OCI-LY7 (cell line): ENCODE measurements at regions of chr6 and their contacts with region 1.

Region 1: GRCh38 chr6:52503848-52504781 is 72.7 kb downstream of the TRAM2 start:
- DNase-seq: no peak
- H3K4me3 ChIP-seq: no peak overlapping the region
- H3K27ac ChIP-seq: no peak overlapping the region
- H3K4me1 ChIP-seq: peaks cover 34% of the 10 kb centered on the region
- CTCF ChIP-seq: no peak

Region 2: DNA sequence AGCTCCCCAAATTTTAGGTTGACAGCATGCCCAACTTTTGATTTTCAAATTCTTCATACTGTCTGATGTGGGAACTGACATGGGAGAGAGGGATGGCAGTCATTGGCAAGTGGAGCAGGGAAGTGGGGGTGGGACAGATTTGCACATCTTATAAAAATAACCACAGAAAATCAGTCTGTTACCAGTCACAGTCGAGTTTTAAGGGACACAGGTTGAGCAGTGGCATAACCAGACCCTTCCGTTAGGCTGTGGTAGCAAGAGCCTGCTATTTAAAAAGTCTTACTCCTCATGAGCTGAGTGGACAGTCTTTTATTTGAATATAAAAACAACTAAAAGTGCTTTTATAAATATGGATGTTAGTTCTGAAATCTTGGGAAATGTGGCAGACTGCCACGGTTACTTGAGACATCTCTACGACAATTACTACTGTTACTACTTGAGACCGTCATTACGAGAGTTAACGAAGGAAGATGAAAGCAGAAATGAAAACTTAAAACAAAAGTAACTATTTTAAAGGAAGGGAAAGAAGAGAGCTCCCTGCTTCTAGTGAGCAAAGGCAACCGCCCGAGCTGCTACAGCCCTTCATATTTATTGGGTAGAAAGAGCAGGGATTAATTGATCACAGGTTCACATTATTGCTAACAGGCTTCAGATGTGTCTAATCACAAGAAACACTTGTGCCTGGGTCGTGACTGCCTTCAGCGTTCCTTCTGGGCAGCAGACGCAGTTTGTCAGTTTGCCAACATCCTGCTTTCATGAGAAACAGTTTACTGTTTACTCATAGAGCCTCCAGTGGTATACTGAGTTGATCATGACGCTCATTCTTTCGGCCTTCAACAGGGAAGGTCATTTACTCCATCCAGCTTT is 12.7 kb before region 1 on chr6:
- CTCF ChIA-PET with region 1: interaction called, 3 read pairs
- POLR2A ChIA-PET with region 1: interaction called, 15 read pairs
- intact Hi-C with region 1: no loop called
- DNase-seq: no peak
- H3K4me3 ChIP-seq: peak overlapping the region; percentile 12
- H3K27ac ChIP-seq: peak overlapping the region; percentile 27
- H3K4me1 ChIP-seq: peaks cover 68% of the 10 kb centered on the region
- CTCF ChIP-seq: no peak